Right lobe of liver (tissue), 6 donors: ENCODE measurements at regions of chr4 and their contacts with region 1.

Region 1: DNA sequence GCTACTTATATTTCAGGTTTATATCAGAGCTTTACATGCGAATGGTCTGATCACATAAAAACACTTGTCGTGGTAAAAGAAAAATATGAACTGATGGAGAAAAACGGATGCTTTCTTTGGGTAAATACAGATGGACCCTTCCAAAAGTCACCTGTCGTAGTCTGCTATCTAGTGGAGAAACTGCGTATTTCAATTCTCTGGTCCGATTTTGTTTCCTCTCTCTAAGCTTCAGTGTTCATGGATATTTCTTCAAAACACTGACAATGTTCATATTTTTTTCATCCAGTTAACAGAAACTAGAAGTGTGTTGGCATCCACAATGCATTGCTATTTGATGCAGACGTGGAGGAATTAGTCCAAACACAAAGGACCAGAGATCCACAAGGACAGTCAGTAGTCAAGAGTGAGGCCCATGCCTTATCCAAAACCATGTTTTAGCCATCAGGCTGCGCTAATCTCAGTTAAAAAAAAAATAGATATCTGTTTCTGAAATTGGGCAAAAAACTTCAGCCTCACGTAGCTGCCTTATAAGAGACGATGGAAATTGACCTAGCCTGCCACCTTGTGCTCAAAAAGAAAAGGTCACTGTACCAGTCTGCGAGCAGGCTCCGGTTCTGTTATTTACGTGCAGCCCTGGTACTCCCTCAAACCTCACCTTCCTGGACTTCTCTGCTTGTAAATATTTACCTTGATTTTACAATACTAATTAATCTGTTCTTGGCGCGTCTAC is 16.0 kb downstream of the MEPE start:
- DNase-seq: peak in 2 of 3 donors; percentile 36 to 56
- ATAC-seq: peak; percentile 86 to 92 (median 88)
- H3K4me3 ChIP-seq: peak overlapping the region in 1 of 3 donors; percentile 8
- H3K27ac ChIP-seq: no peak overlapping the region
- H3K4me1 ChIP-seq: peaks cover 0 to 15% (median 0%) of the 10 kb centered on the region in 4 donors
- H3K27me3 ChIP-seq: no peaks in the 10 kb centered on the region
- CTCF ChIP-seq: peak; percentile 47 to 62 (median 57)
- POLR2A ChIP-seq: no peak

Region 2: GRCh38 chr4:87679449-87680169 is 169.2 kb before region 1 on chr4:
- intact Hi-C with region 1: loop called in 1 of 2 experiments (anchors 10 kb)
- DNase-seq: peak in 1 of 3 donors; percentile 23
- ATAC-seq: peak; percentile 51 to 70 (median 62)
- H3K4me3 ChIP-seq: no peak overlapping the region
- H3K27ac ChIP-seq: no peak overlapping the region
- H3K4me1 ChIP-seq: no peaks in the 10 kb centered on the region
- H3K27me3 ChIP-seq: no peaks in the 10 kb centered on the region
- CTCF ChIP-seq: peak; percentile 65 to 77 (median 75)
- POLR2A ChIP-seq: no peak

Region 3: DNA sequence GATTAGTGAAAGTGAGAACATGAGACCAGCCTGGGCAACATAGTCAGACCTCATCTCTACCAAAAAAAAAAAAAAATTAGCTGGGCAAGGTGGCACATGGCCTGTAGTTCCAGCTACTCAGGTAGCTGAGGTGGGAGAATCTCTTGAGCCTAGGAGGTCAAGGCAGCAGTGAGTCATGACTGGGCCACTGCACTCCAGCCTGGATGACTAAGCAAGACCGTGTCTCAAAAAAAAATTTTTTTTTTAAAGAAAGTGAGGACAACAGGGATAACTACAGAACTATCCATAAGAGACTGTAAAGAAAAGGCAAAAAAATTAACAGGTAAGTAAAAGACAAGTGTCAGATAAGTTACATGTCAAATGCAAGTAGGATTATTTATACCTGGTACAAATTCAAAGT is 113.2 kb after region 1 on chr4:
- intact Hi-C with region 1: loop called in 1 of 2 experiments (anchors 10 kb)
- DNase-seq: no peak
- ATAC-seq: peak in 1 of 4 donors; percentile 61
- H3K4me3 ChIP-seq: no peak overlapping the region
- H3K27ac ChIP-seq: no peak overlapping the region
- H3K4me1 ChIP-seq: no peaks in the 10 kb centered on the region
- H3K27me3 ChIP-seq: no peaks in the 10 kb centered on the region
- CTCF ChIP-seq: no peak
- POLR2A ChIP-seq: no peak

Region 4: DNA sequence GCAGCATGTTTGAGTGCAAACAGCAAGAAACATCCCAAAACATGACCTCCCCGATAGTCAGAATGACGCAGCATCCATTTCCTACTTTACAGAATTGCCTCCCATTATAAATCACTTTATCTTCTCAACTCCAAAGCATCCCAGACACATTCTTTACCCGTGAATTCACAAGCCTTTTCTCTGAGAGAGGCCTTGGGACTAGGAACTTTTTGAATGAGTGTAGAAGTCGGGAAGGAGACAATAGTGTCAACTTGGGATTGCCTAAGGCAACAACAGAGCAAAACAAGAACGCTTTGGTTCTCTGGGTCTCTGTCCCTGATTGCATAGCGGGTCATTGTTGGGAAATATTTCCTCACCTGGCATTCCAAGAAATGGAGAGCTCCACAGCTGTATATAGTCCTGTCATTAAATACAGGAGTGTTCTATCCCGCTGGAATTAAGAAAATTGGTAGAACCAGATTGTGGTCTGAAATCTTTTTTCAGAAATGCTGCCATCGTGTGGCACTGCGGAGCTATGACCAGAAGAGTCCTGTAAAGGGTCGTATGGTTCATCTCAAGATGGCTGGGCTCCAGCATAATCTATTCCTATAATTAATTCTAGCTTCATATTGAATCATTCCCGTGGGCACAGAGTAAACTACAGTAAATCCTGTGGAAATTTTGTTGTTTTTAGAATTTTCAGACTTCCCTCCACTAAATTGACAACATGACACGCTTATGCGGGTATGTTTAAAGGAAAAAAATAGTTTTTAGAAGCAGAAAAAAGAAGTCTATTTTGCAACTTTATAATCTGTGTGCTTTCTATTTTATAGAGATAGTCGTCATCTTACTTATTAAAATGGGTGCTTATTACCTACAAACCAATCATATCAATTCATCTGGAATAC is 124.7 kb after region 1 on chr4:
- intact Hi-C with region 1: loop called (anchors 5 to 10 kb)
- DNase-seq: peak; percentile 62 to 66 (median 64)
- ATAC-seq: peak; percentile 88 to 93 (median 90)
- H3K4me3 ChIP-seq: peak overlapping the region in 1 of 3 donors; percentile 16
- H3K27ac ChIP-seq: no peak overlapping the region
- H3K4me1 ChIP-seq: peaks cover 0 to 21% (median 8%) of the 10 kb centered on the region in 4 donors
- H3K27me3 ChIP-seq: no peaks in the 10 kb centered on the region
- CTCF ChIP-seq: peak; percentile 84 to 87 (median 86)
- POLR2A ChIP-seq: no peak

Region 5: GRCh38 chr4:88007304-88008121 is 158.7 kb after region 1 on chr4 and contains the start of gene PKD2:
- intact Hi-C with region 1: no loop called
- DNase-seq: peak; percentile 88 to 92 (median 91)
- ATAC-seq: peak; percentile 97 to 99 (median 98)
- H3K4me3 ChIP-seq: peak within 1 kb of the TSS; percentile 68 to 84 (median 75)
- H3K27ac ChIP-seq: peak within 1 kb of the TSS; percentile 44 to 65 (median 56)
- H3K4me1 ChIP-seq: peaks cover 0 to 11% (median 0%) of the 10 kb centered on the region in 4 donors
- H3K27me3 ChIP-seq: no peaks in the 10 kb centered on the region
- CTCF ChIP-seq: no peak
- POLR2A ChIP-seq: peak; percentile 57
- total RNA-seq, gene PKD2: 5.5 to 9.0 (median 6.7) TPM